ENCODE measurements at regions of chr1 and their contacts with region 1.

Region 1: GRCh38 chr1:25022361-25023189 is 92.5 kb upstream of the RUNX3 start:
- DNase-seq: peak; percentile 97
- ATAC-seq: peak; percentile 84
- H3K4me3 Mint-ChIP-seq: peak overlapping the region; percentile 77
- H3K27ac Mint-ChIP-seq: peak overlapping the region; percentile 99
- H3K4me1 Mint-ChIP-seq: peaks cover 92% of the 10 kb centered on the region
- H3K27me3 Mint-ChIP-seq: no peaks in the 10 kb centered on the region

Region 2: GRCh38 chr1:24481101-24481500 is 541.5 kb before region 1 on chr1:
- CTCF ChIA-PET with region 1: no interaction called
- POLR2A ChIA-PET with region 1: no interaction called
- intact Hi-C with region 1: loop called in 1 of 2 experiments (anchors 10 kb)
- DNase-seq: peak; percentile 81
- ATAC-seq: peak; percentile 76
- H3K4me3 Mint-ChIP-seq: peak overlapping the region; percentile 60
- H3K27ac Mint-ChIP-seq: peak overlapping the region; percentile 97
- H3K4me1 Mint-ChIP-seq: peaks cover 65% of the 10 kb centered on the region
- H3K27me3 Mint-ChIP-seq: no peaks in the 10 kb centered on the region

Region 3: GRCh38 chr1:24925082-24925779 is 97.3 kb before region 1 on chr1:
- CTCF ChIA-PET with region 1: interaction called, 3 read pairs
- POLR2A ChIA-PET with region 1: interaction called, 10 read pairs
- intact Hi-C with region 1: loop called in 1 of 2 experiments (anchors 1 kb)
- DNase-seq: peak; percentile 92
- ATAC-seq: peak; percentile 45
- H3K4me3 Mint-ChIP-seq: peak overlapping the region; percentile 80
- H3K27ac Mint-ChIP-seq: peak overlapping the region; percentile 91
- H3K4me1 Mint-ChIP-seq: peaks cover 70% of the 10 kb centered on the region
- H3K27me3 Mint-ChIP-seq: no peaks in the 10 kb centered on the region

Region 4: DNA sequence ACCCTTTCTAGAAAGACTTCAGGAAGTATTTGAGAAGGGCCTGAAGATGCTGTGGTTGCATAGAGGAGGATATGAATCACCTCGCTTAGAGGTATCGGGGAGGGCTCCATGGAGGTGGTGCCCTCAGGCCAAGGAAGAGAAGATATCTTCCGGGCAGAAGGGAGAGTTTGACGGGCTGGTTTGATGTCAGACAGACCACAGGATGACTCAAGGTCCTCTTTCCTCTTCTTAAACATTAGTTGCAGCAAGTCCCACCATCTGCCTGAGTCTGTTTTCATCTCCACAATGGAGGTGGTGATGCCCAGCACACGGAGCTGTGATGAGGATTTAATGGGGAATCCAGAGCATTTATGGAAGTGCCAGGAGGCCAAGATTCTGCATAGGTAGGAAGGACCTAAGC is 67.4 kb before region 1 on chr1:
- CTCF ChIA-PET with region 1: no interaction called
- POLR2A ChIA-PET with region 1: no interaction called
- intact Hi-C with region 1: loop called in 1 of 2 experiments (anchors 1 kb)
- DNase-seq: peak; percentile 89
- ATAC-seq: peak; percentile 85
- H3K4me3 Mint-ChIP-seq: peak overlapping the region; percentile 94
- H3K27ac Mint-ChIP-seq: peak overlapping the region; percentile 99
- H3K4me1 Mint-ChIP-seq: peaks cover 93% of the 10 kb centered on the region
- H3K27me3 Mint-ChIP-seq: no peaks in the 10 kb centered on the region

Region 5: DNA sequence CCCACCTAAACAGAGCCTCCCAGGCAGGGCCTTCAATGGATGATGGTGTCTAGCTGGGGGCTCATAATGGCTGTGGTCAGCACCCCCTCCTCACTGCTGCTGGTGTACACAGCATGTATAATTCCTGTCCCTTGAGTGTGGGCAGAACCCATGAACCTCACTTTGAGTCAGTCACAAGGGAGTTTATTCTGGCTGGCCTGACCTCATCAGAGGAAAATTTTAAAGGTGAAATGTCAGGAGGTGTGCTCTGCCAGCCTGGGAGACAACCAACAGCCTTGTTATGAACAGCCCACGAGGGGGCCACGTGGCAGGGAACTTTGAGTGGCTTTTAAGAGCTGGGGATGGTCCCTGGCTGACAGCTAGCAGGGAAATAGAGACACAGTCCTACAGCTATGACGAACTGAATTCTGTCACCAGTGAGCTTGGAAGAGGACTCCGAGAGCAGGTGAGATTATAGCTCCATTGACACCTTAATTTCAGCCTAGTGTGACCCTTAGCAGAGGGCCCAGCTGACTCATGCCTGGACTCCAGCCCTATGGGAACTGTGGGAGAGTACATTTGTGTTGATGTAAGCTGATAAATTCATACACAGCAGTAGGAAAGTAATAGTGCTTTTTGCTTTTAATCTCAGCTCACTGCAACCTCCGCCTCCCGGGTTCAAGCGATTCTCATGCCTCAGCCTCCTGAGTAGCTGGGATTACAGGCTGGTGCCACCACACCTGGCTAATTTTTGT is 19.0 kb before region 1 on chr1:
- CTCF ChIA-PET with region 1: no interaction called
- POLR2A ChIA-PET with region 1: interaction called, 5 read pairs
- intact Hi-C with region 1: loop called in 1 of 2 experiments (anchors 1 kb)
- DNase-seq: peak; percentile 72
- ATAC-seq: peak; percentile 84
- H3K4me3 Mint-ChIP-seq: no peak overlapping the region
- H3K27ac Mint-ChIP-seq: peak overlapping the region; percentile 84
- H3K4me1 Mint-ChIP-seq: peaks cover 63% of the 10 kb centered on the region
- H3K27me3 Mint-ChIP-seq: no peaks in the 10 kb centered on the region

Region 6: GRCh38 chr1:25117233-25117823 is 94.8 kb after region 1 on chr1:
- CTCF ChIA-PET with region 1: interaction called, 5 read pairs
- POLR2A ChIA-PET with region 1: interaction called, 3 read pairs
- intact Hi-C with region 1: loop called in 1 of 2 experiments (anchors 1 kb)
- DNase-seq: peak; percentile 70
- ATAC-seq: no peak
- H3K4me3 Mint-ChIP-seq: no peak overlapping the region
- H3K27ac Mint-ChIP-seq: no peak overlapping the region
- H3K4me1 Mint-ChIP-seq: peaks cover 28% of the 10 kb centered on the region
- H3K27me3 Mint-ChIP-seq: peaks cover 4% of the 10 kb centered on the region

Region 7: DNA sequence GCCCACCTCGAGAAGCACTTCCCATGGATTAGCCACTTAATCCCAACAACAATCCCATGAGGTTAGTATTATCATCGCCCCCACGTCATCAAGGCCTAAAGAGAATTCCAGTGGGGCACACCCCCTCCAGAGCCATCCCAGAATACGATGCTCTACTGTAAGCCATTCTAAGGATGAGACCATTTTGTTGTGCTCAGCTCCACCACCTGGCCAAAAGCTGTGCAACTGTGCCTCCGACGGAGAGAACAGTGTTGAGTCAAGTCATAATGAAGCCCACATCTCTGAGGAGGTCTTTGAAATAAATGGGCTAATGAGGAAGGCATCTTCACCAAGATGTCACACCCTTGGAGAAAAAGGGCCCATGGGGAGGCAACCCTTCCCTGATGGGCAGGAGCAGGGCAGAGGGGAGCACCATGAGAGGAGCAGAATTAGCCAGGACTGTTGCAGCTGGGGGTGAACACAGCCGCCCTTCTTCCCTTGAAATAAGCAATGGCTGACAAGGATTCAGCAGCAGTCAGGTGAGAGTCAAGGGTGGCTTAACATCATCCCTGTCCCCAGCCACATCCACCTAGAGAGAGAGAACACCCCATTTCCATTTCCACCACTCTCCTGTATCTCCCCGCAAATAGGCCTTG is 195.1 kb after region 1 on chr1:
- CTCF ChIA-PET with region 1: no interaction called
- POLR2A ChIA-PET with region 1: no interaction called
- intact Hi-C with region 1: no loop called
- DNase-seq: no peak
- ATAC-seq: no peak
- H3K4me3 Mint-ChIP-seq: no peak overlapping the region
- H3K27ac Mint-ChIP-seq: no peak overlapping the region
- H3K4me1 Mint-ChIP-seq: no peaks in the 10 kb centered on the region
- H3K27me3 Mint-ChIP-seq: no peaks in the 10 kb centered on the region

Measured in activated CD4-positive, alpha-beta T cell treated with anti-CD3 and anti-CD28 coated beads for 36 hours (primary cell).